ENCODE measurements at regions of chr7 and their contacts with region 1.

Region 1: GRCh38 chr7:47080816-47081215 is 501.1 kb downstream of the TNS3 start:
- DNase-seq: no peak
- ATAC-seq: peak; percentile 29

Region 2: DNA sequence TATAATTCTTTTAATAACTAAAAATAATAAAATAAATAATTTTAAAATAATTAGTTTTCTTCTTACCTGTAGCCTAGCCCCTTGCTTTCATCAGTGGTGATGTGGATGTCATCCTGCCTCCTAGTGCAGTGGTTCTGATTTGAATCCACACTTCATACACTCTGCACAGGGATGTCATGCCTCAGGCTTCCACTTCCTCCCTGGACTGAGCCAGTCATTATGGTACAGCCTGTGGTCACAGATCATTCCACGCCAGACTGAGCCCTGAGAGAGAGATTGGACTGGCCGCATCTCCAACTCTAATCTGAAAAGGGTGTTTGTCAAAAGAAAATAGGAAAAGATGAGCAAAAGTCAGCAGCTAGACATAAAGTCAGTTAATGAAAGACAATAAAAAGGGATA is 723.5 kb before region 1 on chr7:
- intact Hi-C with region 1: loop called (anchors 5 kb)
- DNase-seq: no peak
- ATAC-seq: no peak

Region 3: DNA sequence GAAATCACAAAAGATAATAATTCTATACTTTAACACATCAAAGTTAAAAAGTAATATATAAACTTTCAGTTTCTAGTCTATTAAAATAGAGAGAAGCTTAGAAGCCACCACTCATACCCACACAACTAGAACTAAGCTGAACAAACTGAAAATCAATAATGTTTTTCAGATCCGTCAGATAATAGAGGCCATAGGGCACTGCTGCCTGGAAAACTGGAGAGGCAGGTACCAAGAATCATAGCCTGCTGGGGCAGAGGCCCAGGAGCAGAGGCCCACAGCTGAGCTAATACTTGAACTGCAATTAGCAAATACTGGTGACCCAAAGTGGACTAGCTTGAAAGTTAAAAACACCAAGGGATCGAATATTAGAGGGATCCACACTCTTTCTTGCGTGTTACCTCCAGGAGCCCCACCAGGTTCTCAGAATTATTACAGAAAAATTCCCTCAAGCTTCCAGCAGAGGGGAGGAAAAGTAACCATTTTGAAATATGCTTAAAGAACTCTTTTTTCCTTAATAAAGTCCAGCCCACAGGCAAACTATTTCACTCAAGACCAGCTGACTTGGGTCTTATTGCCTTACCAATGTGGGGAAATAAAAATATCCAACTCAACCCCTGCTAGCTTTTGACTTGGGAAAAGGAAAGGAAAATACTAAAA is 385.6 kb before region 1 on chr7:
- intact Hi-C with region 1: no loop called
- DNase-seq: no peak
- ATAC-seq: no peak

Region 4: DNA sequence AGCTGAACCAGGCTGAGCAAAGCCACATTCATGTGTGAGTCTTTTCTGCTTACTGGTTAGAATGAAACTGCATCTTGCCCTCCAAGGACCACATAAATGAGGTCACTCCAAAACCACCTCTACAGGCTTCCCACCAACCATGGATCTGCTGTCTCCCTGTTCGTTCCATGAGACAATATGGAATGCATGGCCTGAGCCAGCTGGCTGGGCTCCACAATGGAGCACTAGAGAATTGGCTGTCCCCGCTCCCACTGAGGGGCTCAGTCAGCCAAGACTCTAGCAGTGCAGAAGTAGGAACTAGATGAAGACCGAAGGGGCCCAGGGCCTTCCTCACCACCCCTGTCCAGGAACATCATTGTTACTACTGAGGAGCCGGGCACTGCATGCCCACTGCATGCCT is 380.4 kb after region 1 on chr7:
- intact Hi-C with region 1: no loop called
- DNase-seq: peak; percentile 85
- ATAC-seq: peak; percentile 89

Region 5: GRCh38 chr7:48101968-48102367 is 1021.2 kb after region 1 on chr7:
- intact Hi-C with region 1: no loop called
- DNase-seq: no peak
- ATAC-seq: no peak

Measured in Right ventricle myocardium superior (tissue), 1 donor.